Common myeloid progenitor, CD34-positive (primary cell): ENCODE measurements at regions of chr19 and their contacts with region 1.

Region 1: GRCh38 chr19:4246767-4247593 is at the start of gene YJU2:
- DNase-seq: peak; percentile 100
- H3K4me3 ChIP-seq: peak within 1 kb of the TSS; percentile 90 to 100 (median 95)
- H3K27ac ChIP-seq: peak within 1 kb of the TSS; percentile 99
- H3K4me1 ChIP-seq: peaks cover 6 to 15% (median 11%) of the 10 kb centered on the region in 4 experiments
- H3K27me3 ChIP-seq: no peaks in the 10 kb centered on the region

Region 2: GRCh38 chr19:4232958-4233853 is 13.8 kb before region 1 on chr19:
- CTCF ChIA-PET with region 1: interaction called, 13 read pairs
- POLR2A ChIA-PET with region 1: interaction called, 3 read pairs
- DNase-seq: peak; percentile 49 to 63 (median 50)
- H3K4me3 ChIP-seq: no peak overlapping the region
- H3K27ac ChIP-seq: no peak overlapping the region
- H3K4me1 ChIP-seq: peaks cover 0 to 10% (median 9%) of the 10 kb centered on the region in 4 experiments
- H3K27me3 ChIP-seq: peaks cover 0 to 13% (median 2%) of the 10 kb centered on the region in 5 experiments